H1 (cell line): ENCODE measurements at regions of chr14 and their contacts with region 1.

Region 1: GRCh38 chr14:80926397-80927074 is 15.0 kb downstream of the CEP128 start:
- DNase-seq: no peak
- H3K4me3 ChIP-seq: no peak overlapping the region
- H3K27ac ChIP-seq: no peak overlapping the region
- H3K4me1 ChIP-seq: no peaks in the 10 kb centered on the region; a peak in 1 of 7 replicates
- H3K27me3 ChIP-seq: no peaks in the 10 kb centered on the region
- CTCF ChIP-seq: no peak
- EP300 ChIP-seq: no peak
- POLR2A ChIP-seq: no peak
- RAD21 ChIP-seq: no peak

Region 2: GRCh38 chr14:80805136-80805535 is 121.4 kb before region 1 on chr14:
- CTCF ChIA-PET with region 1: no interaction called
- POLR2A ChIA-PET with region 1: no interaction called
- DNase-seq: no peak
- H3K4me3 ChIP-seq: no peak overlapping the region
- H3K27ac ChIP-seq: no peak overlapping the region
- H3K4me1 ChIP-seq: no peaks in the 10 kb centered on the region
- H3K27me3 ChIP-seq: no peaks in the 10 kb centered on the region
- CTCF ChIP-seq: no peak
- EP300 ChIP-seq: no peak
- POLR2A ChIP-seq: no peak
- RAD21 ChIP-seq: no peak

Region 3: GRCh38 chr14:80906946-80907345 is 19.6 kb before region 1 on chr14:
- CTCF ChIA-PET with region 1: interaction called, 12 read pairs
- POLR2A ChIA-PET with region 1: no interaction called
- DNase-seq: no peak
- H3K4me3 ChIP-seq: no peak overlapping the region
- H3K27ac ChIP-seq: no peak overlapping the region
- H3K4me1 ChIP-seq: 0 out of 7 replicates have a peak, but pooled peaks cover 0 to under 1% (median 0%) of the 10 kb centered on the region in 4 experiments
- H3K27me3 ChIP-seq: no peaks in the 10 kb centered on the region
- CTCF ChIP-seq: no peak
- EP300 ChIP-seq: no peak
- POLR2A ChIP-seq: no peak
- RAD21 ChIP-seq: no peak

Region 4: GRCh38 chr14:80965037-80965436 is 38.5 kb after region 1 on chr14:
- CTCF ChIA-PET with region 1: no interaction called
- POLR2A ChIA-PET with region 1: no interaction called
- DNase-seq: no peak
- H3K4me3 ChIP-seq: no peak overlapping the region
- H3K27ac ChIP-seq: no peak overlapping the region
- H3K4me1 ChIP-seq: no peaks in the 10 kb centered on the region
- H3K27me3 ChIP-seq: no peaks in the 10 kb centered on the region
- CTCF ChIP-seq: no peak
- EP300 ChIP-seq: no peak
- POLR2A ChIP-seq: no peak
- RAD21 ChIP-seq: no peak